ENCODE measurements at regions of chr2 and their contacts with region 1.

Region 1: DNA sequence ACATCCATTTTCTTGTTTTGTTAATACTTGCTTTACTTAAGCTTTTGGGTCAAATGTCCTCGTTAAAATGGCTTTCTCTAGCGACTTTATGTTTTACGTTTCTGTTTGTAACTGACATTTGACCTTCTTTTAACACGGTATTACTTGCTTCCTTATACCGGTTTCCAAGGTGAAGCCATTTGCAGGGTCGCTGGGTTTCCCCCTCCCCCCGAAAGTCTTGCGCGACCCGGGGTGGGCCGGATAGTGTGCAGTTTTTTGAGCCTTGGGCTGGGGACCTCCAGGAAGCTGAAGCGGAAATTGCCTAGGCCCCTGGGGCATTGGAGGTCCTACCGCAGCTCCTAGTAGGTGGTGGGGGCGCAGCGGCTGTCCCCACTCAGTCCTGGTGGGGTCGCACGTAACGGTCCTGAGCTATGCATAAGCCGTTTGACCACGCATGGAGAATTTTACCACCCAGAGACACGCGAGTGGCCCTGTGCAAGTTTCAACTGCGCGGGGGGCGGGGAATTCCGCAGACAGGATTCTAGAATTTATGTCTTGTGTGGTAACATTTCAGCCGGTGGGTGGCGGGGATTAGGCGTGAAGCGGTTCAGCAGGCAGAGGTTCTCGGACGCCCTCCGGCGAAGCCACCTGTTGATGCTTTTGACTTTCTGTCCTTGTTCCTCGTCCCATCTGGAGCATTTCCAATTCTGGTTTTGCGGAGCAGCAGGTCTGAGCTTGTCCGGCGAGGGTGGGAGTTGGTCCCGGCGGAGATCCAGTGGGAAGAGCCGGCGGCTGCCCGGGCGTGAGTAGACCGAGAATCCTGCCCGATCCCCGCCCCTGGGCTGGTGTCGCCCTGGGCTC is 2.4 kb downstream of the CFLAR start:
- DNase-seq: peak; percentile 97
- ATAC-seq: peak; percentile 45
- H3K4me3 Mint-ChIP-seq: peak overlapping the region; percentile 95
- H3K27ac Mint-ChIP-seq: peak overlapping the region; percentile 92
- H3K4me1 Mint-ChIP-seq: peaks cover 43% of the 10 kb centered on the region
- H3K27me3 Mint-ChIP-seq: no peaks in the 10 kb centered on the region
- CTCF ChIP-seq: peak; percentile 43

Region 2: GRCh38 chr2:200877443-200877842 is 240.9 kb before region 1 on chr2:
- CTCF ChIA-PET with region 1: no interaction called
- POLR2A ChIA-PET with region 1: no interaction called
- intact Hi-C with region 1: no loop called
- DNase-seq: no peak
- ATAC-seq: no peak
- H3K4me3 Mint-ChIP-seq: no peak overlapping the region
- H3K27ac Mint-ChIP-seq: no peak overlapping the region
- H3K4me1 Mint-ChIP-seq: peaks cover 9% of the 10 kb centered on the region
- H3K27me3 Mint-ChIP-seq: no peaks in the 10 kb centered on the region
- CTCF ChIP-seq: no peak

Region 3: DNA sequence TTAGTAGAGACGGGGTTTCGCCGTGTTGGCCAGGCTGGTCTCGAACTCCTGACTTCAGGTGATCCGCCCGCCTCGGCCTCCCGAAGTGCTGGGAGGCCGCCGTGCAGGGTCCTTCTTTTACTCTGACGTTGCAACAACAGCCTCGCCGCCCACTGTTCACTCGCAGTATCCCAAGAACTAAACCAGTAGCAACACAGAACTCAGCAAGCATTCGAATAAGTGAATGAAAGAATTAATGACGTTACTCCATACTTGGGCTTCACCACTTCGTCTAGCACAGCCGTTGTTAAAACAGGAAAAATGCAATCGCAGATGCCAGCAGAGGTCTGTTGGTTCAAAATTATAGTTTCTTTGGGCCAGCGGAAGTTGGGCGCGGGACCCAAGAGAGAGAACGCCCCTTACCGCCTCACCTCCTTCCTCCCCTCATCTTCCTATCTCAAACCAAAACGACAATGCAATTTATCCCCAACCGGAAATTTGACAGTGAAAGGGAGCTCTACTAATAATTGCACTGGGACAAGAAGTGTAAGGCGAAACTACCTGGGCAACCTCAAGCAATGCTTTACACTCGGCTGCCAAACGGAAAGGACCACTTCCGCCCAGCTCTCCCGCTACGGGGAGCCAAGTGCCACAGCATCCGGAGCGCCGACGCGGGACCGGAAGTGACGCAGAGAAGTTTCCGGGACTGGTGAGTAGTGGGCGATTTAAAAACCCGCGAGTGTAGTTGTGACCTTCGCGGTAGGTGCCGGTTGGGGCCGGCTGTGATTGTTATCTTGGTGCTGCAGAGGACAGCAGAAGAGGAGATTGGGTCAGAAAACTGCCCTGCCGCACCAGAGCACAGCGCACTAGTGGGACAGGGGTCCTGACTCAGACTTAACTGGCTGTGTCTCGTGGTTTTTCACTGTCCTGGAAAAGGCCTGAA is 229.4 kb before region 1 on chr2 and contains the starts of genes NIF3L1 and PPIL3:
- CTCF ChIA-PET with region 1: interaction called, 3 read pairs
- POLR2A ChIA-PET with region 1: interaction called, 19 read pairs
- intact Hi-C with region 1: no loop called
- DNase-seq: peak; percentile 99
- ATAC-seq: peak; percentile 83
- H3K4me3 Mint-ChIP-seq: peak within 1 kb of the TSS; percentile 87
- H3K27ac Mint-ChIP-seq: peak within 1 kb of the TSS; percentile 99
- H3K4me1 Mint-ChIP-seq: peaks cover 46% of the 10 kb centered on the region
- H3K27me3 Mint-ChIP-seq: no peaks in the 10 kb centered on the region
- CTCF ChIP-seq: no peak
- total RNA-seq, gene NIF3L1: 30.8 to 35.3 TPM
- total RNA-seq, gene PPIL3: 97.9 to 99.4 TPM

Region 4: DNA sequence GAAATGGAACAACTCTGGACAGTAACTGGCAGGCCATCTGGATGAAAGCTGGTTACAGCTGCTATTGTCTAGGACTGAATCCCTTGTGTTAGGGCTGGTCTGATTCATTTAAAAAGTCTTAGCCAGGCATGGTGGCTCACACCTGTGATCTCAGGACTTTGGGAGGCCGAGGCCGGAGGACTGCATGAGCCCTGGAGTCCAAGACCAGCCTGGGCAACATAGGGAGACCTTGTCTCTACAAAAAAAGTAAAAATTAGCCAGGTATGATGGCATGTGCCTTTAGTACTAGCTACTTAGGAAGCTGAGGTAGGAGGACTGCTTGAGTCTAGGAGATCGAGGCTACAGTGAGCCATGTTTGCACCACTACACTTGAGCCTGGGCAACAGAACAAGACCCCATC is 17.8 kb before region 1 on chr2:
- CTCF ChIA-PET with region 1: no interaction called
- POLR2A ChIA-PET with region 1: interaction called, 10 read pairs
- intact Hi-C with region 1: no loop called
- DNase-seq: no peak
- ATAC-seq: no peak
- H3K4me3 Mint-ChIP-seq: no peak overlapping the region
- H3K27ac Mint-ChIP-seq: no peak overlapping the region
- H3K4me1 Mint-ChIP-seq: no peaks in the 10 kb centered on the region
- H3K27me3 Mint-ChIP-seq: no peaks in the 10 kb centered on the region
- CTCF ChIP-seq: no peak

Region 5: GRCh38 chr2:201139836-201140604 is 21.7 kb after region 1 on chr2:
- CTCF ChIA-PET with region 1: interaction called, 14 read pairs
- POLR2A ChIA-PET with region 1: interaction called, 15 read pairs
- intact Hi-C with region 1: no loop called
- DNase-seq: no peak
- ATAC-seq: no peak
- H3K4me3 Mint-ChIP-seq: no peak overlapping the region
- H3K27ac Mint-ChIP-seq: no peak overlapping the region
- H3K4me1 Mint-ChIP-seq: peaks cover 50% of the 10 kb centered on the region
- H3K27me3 Mint-ChIP-seq: no peaks in the 10 kb centered on the region
- CTCF ChIP-seq: no peak

Region 6: GRCh38 chr2:201158111-201158929 is 40.0 kb after region 1 on chr2:
- CTCF ChIA-PET with region 1: interaction called, 27 read pairs
- POLR2A ChIA-PET with region 1: interaction called, 14 read pairs
- intact Hi-C with region 1: no loop called
- DNase-seq: peak; percentile 64
- ATAC-seq: peak; percentile 81
- H3K4me3 Mint-ChIP-seq: no peak overlapping the region
- H3K27ac Mint-ChIP-seq: peak overlapping the region; percentile 85
- H3K4me1 Mint-ChIP-seq: peaks cover 24% of the 10 kb centered on the region
- H3K27me3 Mint-ChIP-seq: no peaks in the 10 kb centered on the region
- CTCF ChIP-seq: peak; percentile 65